ENCODE measurements at regions of chr11 and their contacts with region 1.

Region 1: GRCh38 chr11:10490398-10491241 is 35.6 kb downstream of the AMPD3 start:
- DNase-seq: peak; percentile 87
- H3K4me3 Mint-ChIP-seq: no peak overlapping the region
- H3K27ac Mint-ChIP-seq: peak overlapping the region; percentile 96
- H3K4me1 Mint-ChIP-seq: peaks cover 23% of the 10 kb centered on the region
- H3K27me3 Mint-ChIP-seq: no peaks in the 10 kb centered on the region
- CTCF ChIP-seq: no peak

Region 2: DNA sequence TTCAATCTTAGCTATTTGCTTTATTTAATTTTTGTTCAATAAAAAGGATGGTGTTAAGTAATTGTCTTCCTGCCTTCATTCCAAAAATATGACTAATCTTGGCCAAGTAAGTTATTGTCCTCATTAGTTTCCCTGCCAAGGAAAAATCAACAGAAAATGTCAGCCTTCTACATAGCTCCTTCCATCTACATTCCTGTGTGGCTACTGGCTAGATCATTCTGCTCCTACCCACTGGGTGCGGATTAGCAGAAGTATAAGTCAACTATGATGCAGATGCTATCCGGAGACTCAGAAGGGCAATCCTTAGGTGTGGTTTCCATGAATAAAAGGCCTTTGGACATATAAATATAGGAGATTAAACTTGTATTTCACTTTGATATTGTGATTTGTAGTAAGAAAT is 351.0 kb before region 1 on chr11:
- CTCF ChIA-PET with region 1: no interaction called
- POLR2A ChIA-PET with region 1: no interaction called
- intact Hi-C with region 1: no loop called
- DNase-seq: peak; percentile 75
- H3K4me3 Mint-ChIP-seq: no peak overlapping the region
- H3K27ac Mint-ChIP-seq: peak overlapping the region; percentile 82
- H3K4me1 Mint-ChIP-seq: peaks cover 11% of the 10 kb centered on the region
- H3K27me3 Mint-ChIP-seq: no peaks in the 10 kb centered on the region
- CTCF ChIP-seq: no peak

Region 3: DNA sequence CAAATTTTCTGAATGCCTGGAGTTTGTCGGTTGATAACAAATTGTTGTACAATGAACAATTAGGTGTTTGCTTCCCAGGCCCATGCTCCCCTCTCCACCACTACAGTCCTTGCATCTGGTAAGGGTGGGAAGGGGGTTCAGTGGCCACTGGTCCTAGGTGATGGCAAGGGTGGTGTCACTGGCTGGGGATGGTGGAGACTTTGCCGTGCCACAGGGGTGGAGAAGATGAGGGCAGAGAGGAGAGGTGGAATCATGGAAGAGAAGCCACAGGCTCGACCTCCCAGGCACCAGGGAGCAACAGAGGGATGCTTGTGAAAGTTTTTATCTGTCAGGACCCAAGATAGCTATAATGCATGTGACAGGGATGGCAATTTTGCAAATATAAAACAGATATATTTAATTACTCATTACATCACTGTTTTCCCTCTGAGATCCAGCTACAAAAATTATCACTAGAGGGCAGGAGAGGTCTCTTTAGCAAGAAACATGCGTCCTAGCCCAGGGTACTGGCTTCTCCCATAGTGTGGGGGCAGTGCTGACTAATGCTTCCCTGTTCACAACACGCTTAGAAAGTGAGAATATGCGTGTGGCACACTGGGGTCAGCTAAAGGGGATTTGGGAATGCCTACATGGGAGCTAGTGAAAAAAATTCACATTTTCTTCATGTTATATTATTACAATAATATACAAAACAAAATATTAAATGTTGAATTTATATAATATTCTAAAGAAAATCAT is 84.6 kb before region 1 on chr11:
- CTCF ChIA-PET with region 1: interaction called, 16 read pairs
- POLR2A ChIA-PET with region 1: interaction called, 22 read pairs
- intact Hi-C with region 1: no loop called
- DNase-seq: peak; percentile 89
- H3K4me3 Mint-ChIP-seq: no peak overlapping the region
- H3K27ac Mint-ChIP-seq: peak overlapping the region; percentile 40
- H3K4me1 Mint-ChIP-seq: peaks cover 26% of the 10 kb centered on the region
- H3K27me3 Mint-ChIP-seq: no peaks in the 10 kb centered on the region
- CTCF ChIP-seq: peak; percentile 63

Region 4: GRCh38 chr11:10455637-10456487 is 34.8 kb before region 1 on chr11:
- CTCF ChIA-PET with region 1: interaction called, 10 read pairs
- POLR2A ChIA-PET with region 1: interaction called, 75 read pairs
- intact Hi-C with region 1: no loop called
- DNase-seq: peak; percentile 35
- H3K4me3 Mint-ChIP-seq: peak overlapping the region; percentile 60
- H3K27ac Mint-ChIP-seq: peak overlapping the region; percentile 92
- H3K4me1 Mint-ChIP-seq: no peaks in the 10 kb centered on the region
- H3K27me3 Mint-ChIP-seq: no peaks in the 10 kb centered on the region
- CTCF ChIP-seq: no peak

Region 5: GRCh38 chr11:10505278-10506007 is 14.8 kb after region 1 on chr11:
- CTCF ChIA-PET with region 1: interaction called, 5 read pairs
- POLR2A ChIA-PET with region 1: interaction called, 50 read pairs
- intact Hi-C with region 1: no loop called
- DNase-seq: no peak
- H3K4me3 Mint-ChIP-seq: no peak overlapping the region
- H3K27ac Mint-ChIP-seq: peak overlapping the region; percentile 51
- H3K4me1 Mint-ChIP-seq: peaks cover 6% of the 10 kb centered on the region
- H3K27me3 Mint-ChIP-seq: no peaks in the 10 kb centered on the region
- CTCF ChIP-seq: no peak

Region 6: DNA sequence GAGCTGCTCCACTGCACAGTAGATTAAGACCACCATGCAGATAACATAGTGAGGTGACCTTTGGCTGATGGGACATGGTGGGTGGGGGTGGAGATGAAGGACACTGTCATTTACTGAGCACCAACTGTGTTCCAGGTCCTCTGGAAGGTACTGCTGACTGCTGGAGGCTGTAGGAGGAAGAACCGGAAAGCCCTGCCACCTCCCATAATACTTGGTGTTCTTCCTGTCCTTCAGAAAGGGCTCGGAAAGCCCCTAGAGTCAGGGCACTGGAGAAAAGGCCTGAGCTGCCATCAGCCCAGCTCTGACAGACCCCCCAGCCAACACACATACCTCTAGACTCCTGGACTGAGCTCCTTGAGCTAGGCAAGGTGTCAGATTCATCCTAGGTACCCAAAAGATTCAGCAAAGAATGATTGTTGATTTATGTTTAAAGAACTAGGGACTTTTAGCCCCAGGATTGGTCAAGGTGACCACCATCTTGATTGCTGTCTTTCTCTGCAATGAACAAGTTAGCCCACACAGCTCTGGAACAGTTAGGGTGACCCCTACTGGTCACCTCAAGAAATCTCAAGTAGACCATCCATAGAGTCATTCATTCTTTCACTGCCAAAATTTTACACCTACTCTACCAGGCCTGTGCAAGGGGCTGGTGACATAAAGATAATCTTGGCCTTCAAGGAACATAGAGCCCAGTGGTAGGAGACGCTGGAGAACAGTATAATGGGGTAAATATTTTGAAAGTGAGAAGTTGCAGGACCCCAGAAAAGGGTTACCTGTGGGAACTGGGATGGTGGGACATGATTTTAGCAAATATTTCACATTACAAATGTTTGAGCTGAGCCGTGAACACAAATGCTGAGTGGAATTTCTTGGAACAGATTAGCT is 163.5 kb after region 1 on chr11:
- CTCF ChIA-PET with region 1: interaction called, 11 read pairs
- POLR2A ChIA-PET with region 1: interaction called, 3 read pairs
- intact Hi-C with region 1: no loop called
- DNase-seq: peak; percentile 80
- H3K4me3 Mint-ChIP-seq: no peak overlapping the region
- H3K27ac Mint-ChIP-seq: no peak overlapping the region
- H3K4me1 Mint-ChIP-seq: peaks cover 4% of the 10 kb centered on the region
- H3K27me3 Mint-ChIP-seq: no peaks in the 10 kb centered on the region
- CTCF ChIP-seq: peak; percentile 87